ENCODE measurements at regions of chr1 and their contacts with region 1.

Region 1: GRCh38 chr1:27568300-27569087 is 35.5 kb downstream of the AHDC1 start:
- DNase-seq: peak; percentile 92
- ATAC-seq: peak; percentile 91
- H3K4me3 Mint-ChIP-seq: peak overlapping the region; percentile 44
- H3K27ac Mint-ChIP-seq: peak overlapping the region; percentile 32
- H3K4me1 Mint-ChIP-seq: peaks cover 25% of the 10 kb centered on the region
- H3K27me3 Mint-ChIP-seq: no peaks in the 10 kb centered on the region
- CTCF ChIP-seq: peak; percentile 73

Region 2: DNA sequence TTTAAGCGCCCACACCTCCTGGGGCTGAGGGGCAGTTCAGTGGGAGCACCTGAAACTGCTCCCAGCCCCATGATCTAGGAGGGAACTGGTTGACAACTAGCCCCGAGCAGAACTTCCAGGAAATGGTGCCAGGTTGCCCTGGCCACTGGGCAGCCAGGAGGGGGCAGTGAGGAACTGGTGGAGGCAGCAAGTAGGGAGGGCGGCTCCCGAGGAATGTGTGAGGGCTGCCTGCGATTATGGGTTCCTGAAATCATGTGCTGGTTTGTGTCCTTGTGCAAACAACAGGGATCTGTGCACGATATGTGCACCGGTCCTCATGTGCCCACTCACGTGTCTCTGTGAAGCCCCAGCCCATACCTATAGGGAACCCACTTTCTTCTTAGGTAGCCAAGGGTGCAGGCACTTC is 166.1 kb before region 1 on chr1:
- CTCF ChIA-PET with region 1: no interaction called
- POLR2A ChIA-PET with region 1: no interaction called
- intact Hi-C with region 1: no loop called
- DNase-seq: no peak
- ATAC-seq: no peak
- H3K4me3 Mint-ChIP-seq: no peak overlapping the region
- H3K27ac Mint-ChIP-seq: peak overlapping the region; percentile 83
- H3K4me1 Mint-ChIP-seq: peaks cover 24% of the 10 kb centered on the region
- H3K27me3 Mint-ChIP-seq: no peaks in the 10 kb centered on the region
- CTCF ChIP-seq: no peak

Region 3: DNA sequence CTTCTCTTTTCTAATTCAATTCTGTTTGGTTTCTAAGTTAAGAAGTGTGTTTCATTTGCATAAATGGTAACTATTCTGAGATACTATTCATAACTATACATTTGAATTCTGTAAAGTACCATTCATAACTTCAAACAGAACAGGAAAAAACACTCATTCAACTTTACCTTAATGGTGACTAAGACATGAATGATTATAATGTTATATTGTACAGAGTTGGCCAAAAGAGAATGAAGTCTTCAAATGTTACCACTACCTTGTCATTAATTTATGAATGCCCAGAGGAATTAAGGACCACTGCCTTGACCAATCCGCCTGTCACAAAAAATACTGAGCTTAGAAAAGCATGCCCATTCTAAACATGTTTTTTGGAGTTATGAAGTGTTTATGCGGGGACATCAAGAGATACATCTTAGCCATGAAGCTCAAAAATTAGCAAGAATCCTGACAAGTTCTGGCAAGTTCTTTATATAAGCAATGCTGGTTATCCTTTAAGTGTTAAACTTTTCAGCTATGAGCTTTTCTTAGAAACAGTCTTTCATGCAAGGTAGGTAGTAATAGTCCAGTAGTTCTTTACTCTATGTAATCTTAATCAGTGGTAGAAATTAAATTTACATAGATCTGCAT is 86.4 kb before region 1 on chr1:
- CTCF ChIA-PET with region 1: no interaction called
- POLR2A ChIA-PET with region 1: no interaction called
- intact Hi-C with region 1: no loop called
- DNase-seq: no peak
- ATAC-seq: peak; percentile 74
- H3K4me3 Mint-ChIP-seq: no peak overlapping the region
- H3K27ac Mint-ChIP-seq: peak overlapping the region; percentile 56
- H3K4me1 Mint-ChIP-seq: peaks cover 40% of the 10 kb centered on the region
- H3K27me3 Mint-ChIP-seq: no peaks in the 10 kb centered on the region
- CTCF ChIP-seq: no peak

Region 4: GRCh38 chr1:27583479-27583878 is 15.0 kb after region 1 on chr1:
- CTCF ChIA-PET with region 1: interaction called, 17 read pairs
- POLR2A ChIA-PET with region 1: interaction called, 5 read pairs
- intact Hi-C with region 1: no loop called
- DNase-seq: no peak
- ATAC-seq: no peak
- H3K4me3 Mint-ChIP-seq: no peak overlapping the region
- H3K27ac Mint-ChIP-seq: no peak overlapping the region
- H3K4me1 Mint-ChIP-seq: peaks cover 10% of the 10 kb centered on the region
- H3K27me3 Mint-ChIP-seq: no peaks in the 10 kb centered on the region
- CTCF ChIP-seq: no peak

Region 5: DNA sequence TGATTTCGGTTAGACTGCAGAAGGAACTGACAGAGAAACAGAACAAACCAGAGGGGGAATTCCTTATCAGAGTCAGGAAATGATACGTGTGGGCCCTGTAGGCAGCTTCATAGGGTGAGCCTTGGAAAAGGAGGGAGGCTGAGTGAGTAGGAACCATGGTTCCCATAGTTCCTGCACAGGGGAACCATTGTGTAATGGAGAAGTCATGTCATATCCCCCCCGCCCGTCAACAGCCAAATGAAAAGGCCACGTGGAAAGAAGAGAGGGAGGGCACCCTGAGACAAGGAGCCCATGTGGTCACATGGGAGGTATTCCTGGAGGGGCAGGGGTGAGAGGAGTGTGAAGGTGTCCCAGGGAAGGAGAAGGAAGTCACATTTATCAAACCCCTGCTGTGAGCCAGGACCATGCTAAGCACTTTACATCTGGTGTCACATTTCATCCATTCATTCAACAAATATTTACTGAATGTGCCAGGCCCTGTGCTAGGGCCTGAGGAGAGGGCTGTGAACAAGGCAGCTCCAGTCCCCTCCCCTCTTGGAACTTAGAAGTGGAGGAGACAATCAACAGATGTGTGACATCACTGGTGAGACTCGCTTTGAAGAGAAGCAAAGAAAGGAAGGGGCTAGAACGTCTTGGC is 82.2 kb after region 1 on chr1:
- CTCF ChIA-PET with region 1: no interaction called
- POLR2A ChIA-PET with region 1: no interaction called
- intact Hi-C with region 1: no loop called
- DNase-seq: no peak
- ATAC-seq: peak; percentile 45
- H3K4me3 Mint-ChIP-seq: no peak overlapping the region
- H3K27ac Mint-ChIP-seq: peak overlapping the region; percentile 67
- H3K4me1 Mint-ChIP-seq: peaks cover 17% of the 10 kb centered on the region
- H3K27me3 Mint-ChIP-seq: no peaks in the 10 kb centered on the region
- CTCF ChIP-seq: no peak

Measured in activated CD8-positive, alpha-beta T cell treated with anti-CD3 and anti-CD28 coated beads for 36 hours (primary cell).